B cell (primary cell): ENCODE measurements at regions of chr18 and their contacts with region 1.

Region 1: GRCh38 chr18:74264303-74265020 is 27.3 kb downstream of the CYB5A start:
- DNase-seq: peak; percentile 68
- ATAC-seq: peak; percentile 99
- H3K4me3 ChIP-seq: peak overlapping the region in 1 of 5 experiments; percentile 23
- H3K4me3 Mint-ChIP-seq: peak overlapping the region; percentile 73
- H3K27ac ChIP-seq: peak overlapping the region; percentile 67 to 79
- H3K27ac Mint-ChIP-seq: peak overlapping the region; percentile 95
- H3K4me1 ChIP-seq: peaks cover 6 to 17% of the 10 kb centered on the region in 2 donors
- H3K4me1 Mint-ChIP-seq: peaks cover 35% of the 10 kb centered on the region
- H3K27me3 ChIP-seq: no peaks in the 10 kb centered on the region
- H3K27me3 Mint-ChIP-seq: no peaks in the 10 kb centered on the region
- CTCF ChIP-seq: no peak

Region 2: GRCh38 chr18:73164430-73164829 is 1100.0 kb before region 1 on chr18:
- CTCF ChIA-PET with region 1: no interaction called
- POLR2A ChIA-PET with region 1: no interaction called
- intact Hi-C with region 1: no loop called
- DNase-seq: no peak
- ATAC-seq: no peak
- H3K4me3 ChIP-seq: no peak overlapping the region
- H3K4me3 Mint-ChIP-seq: no peak overlapping the region
- H3K27ac ChIP-seq: no peak overlapping the region
- H3K27ac Mint-ChIP-seq: no peak overlapping the region
- H3K4me1 ChIP-seq: no peaks in the 10 kb centered on the region
- H3K4me1 Mint-ChIP-seq: no peaks in the 10 kb centered on the region
- H3K27me3 ChIP-seq: no peaks in the 10 kb centered on the region
- H3K27me3 Mint-ChIP-seq: no peaks in the 10 kb centered on the region
- CTCF ChIP-seq: no peak

Region 3: GRCh38 chr18:74249181-74249968 is 15.1 kb before region 1 on chr18:
- CTCF ChIA-PET with region 1: interaction called, 5 read pairs
- POLR2A ChIA-PET with region 1: interaction called, 3 read pairs
- intact Hi-C with region 1: loop called (anchors 2 kb)
- DNase-seq: no peak
- ATAC-seq: no peak
- H3K4me3 ChIP-seq: peak overlapping the region in 1 of 5 experiments; percentile 8
- H3K4me3 Mint-ChIP-seq: peak overlapping the region; percentile 27
- H3K27ac ChIP-seq: peak overlapping the region; percentile 53 to 80
- H3K27ac Mint-ChIP-seq: peak overlapping the region; percentile 80
- H3K4me1 ChIP-seq: peaks cover 0 to 36% of the 10 kb centered on the region in 2 donors
- H3K4me1 Mint-ChIP-seq: peaks cover 38% of the 10 kb centered on the region
- H3K27me3 ChIP-seq: no peaks in the 10 kb centered on the region
- H3K27me3 Mint-ChIP-seq: no peaks in the 10 kb centered on the region
- CTCF ChIP-seq: no peak

Region 4: DNA sequence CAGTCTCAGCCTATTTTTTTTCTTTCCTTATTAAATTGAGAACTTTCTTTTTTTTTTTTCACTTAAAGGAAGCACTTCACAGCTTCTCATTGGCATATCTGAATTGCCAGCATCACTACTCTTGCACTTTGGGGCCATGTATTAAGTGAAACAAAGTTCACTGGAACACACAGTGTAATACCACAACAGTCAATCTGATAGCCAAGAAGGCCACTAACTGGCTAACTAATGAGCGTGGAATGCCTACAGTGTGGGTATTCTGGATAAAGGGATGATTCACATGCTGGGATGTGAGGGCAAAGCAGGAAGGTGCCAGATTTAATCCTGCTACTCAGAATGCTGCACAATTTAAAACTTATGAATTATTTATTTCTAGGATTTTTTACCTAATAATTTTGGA is 39.5 kb after region 1 on chr18:
- CTCF ChIA-PET with region 1: no interaction called
- POLR2A ChIA-PET with region 1: no interaction called
- intact Hi-C with region 1: loop called (anchors 5 kb)
- DNase-seq: no peak
- ATAC-seq: no peak
- H3K4me3 ChIP-seq: no peak overlapping the region
- H3K4me3 Mint-ChIP-seq: no peak overlapping the region
- H3K27ac ChIP-seq: no peak overlapping the region
- H3K27ac Mint-ChIP-seq: no peak overlapping the region
- H3K4me1 ChIP-seq: no peaks in the 10 kb centered on the region
- H3K4me1 Mint-ChIP-seq: no peaks in the 10 kb centered on the region
- H3K27me3 ChIP-seq: peaks cover 0 to 4% (median 0%) of the 10 kb centered on the region in 4 experiments
- H3K27me3 Mint-ChIP-seq: peaks cover 18% of the 10 kb centered on the region
- CTCF ChIP-seq: no peak